ENCODE measurements at regions of chr7 and their contacts with region 1.

Region 1: DNA sequence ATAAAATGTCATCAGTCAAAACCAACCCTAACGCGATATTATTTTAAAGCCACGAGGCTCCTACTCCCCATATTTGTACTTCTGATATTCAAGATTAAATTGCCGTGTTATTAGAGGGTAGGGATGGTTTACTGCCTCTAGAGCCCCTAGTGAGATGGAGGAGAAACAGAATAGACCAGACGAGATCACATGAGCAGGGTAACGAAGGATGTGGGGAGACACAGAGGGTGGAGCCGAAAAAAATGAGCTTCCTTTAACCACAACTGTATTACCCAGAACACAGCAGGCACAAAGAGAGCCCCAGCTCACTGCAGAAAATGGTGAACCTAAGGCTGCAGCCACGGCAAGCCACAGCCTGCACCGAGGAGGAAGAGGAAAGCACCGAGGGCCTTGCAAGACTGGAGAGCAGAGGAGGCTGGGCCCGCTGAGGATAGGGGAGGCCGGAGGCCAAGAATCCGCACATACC is 14.3 kb downstream of the ZC3HAV1 start:
- DNase-seq: peak; percentile 93
- ATAC-seq: peak; percentile 97
- H3K4me3 ChIP-seq: peak overlapping the region; percentile 14 to 54 (median 35)
- H3K4me3 Mint-ChIP-seq: peak overlapping the region; percentile 83
- H3K27ac ChIP-seq: peak overlapping the region; percentile 75 to 98
- H3K27ac Mint-ChIP-seq: peak overlapping the region; percentile 91
- H3K4me1 ChIP-seq: peaks cover 66 to 67% of the 10 kb centered on the region in 2 donors
- H3K4me1 Mint-ChIP-seq: peaks cover 74% of the 10 kb centered on the region
- H3K27me3 ChIP-seq: no peaks in the 10 kb centered on the region
- H3K27me3 Mint-ChIP-seq: no peaks in the 10 kb centered on the region
- CTCF ChIP-seq: peak; percentile 31

Region 2: DNA sequence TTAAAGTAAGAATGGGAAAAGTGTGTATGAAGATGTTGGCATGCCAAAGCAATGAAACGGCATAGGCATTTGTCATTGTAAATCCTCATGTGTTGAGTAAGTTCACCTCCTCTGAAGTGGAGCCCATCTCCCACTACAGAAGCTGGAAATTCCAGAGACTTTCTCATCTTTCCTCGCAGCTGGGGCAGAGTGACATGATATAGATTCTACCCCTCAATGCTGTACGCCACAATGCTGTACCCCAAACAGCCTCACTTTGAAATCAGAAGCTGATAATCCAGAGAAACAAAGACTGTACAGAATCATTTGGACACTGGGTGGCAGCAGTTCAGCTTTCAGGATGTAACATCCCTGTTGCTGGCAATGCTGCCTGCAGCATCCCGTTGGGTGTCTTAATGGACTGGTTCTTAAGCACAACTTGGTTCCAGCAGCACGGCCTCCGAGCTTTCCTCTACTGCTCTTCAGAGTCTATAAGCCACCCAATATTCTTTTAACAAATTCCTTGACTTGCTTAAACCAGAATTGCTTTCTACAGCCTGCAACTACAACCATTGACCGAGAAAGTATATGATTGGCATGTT is 78.2 kb before region 1 on chr7:
- CTCF ChIA-PET with region 1: interaction called, 10 read pairs
- POLR2A ChIA-PET with region 1: no interaction called
- intact Hi-C with region 1: no loop called
- DNase-seq: peak; percentile 66
- ATAC-seq: peak; percentile 78
- H3K4me3 ChIP-seq: no peak overlapping the region
- H3K4me3 Mint-ChIP-seq: no peak overlapping the region
- H3K27ac ChIP-seq: no peak overlapping the region
- H3K27ac Mint-ChIP-seq: no peak overlapping the region
- H3K4me1 ChIP-seq: peaks cover 0 to 3% of the 10 kb centered on the region in 2 donors
- H3K4me1 Mint-ChIP-seq: peaks cover 4% of the 10 kb centered on the region
- H3K27me3 ChIP-seq: peaks cover 0 to 2% (median 0%) of the 10 kb centered on the region in 4 experiments
- H3K27me3 Mint-ChIP-seq: peaks cover 20% of the 10 kb centered on the region
- CTCF ChIP-seq: peak; percentile 66

Region 3: DNA sequence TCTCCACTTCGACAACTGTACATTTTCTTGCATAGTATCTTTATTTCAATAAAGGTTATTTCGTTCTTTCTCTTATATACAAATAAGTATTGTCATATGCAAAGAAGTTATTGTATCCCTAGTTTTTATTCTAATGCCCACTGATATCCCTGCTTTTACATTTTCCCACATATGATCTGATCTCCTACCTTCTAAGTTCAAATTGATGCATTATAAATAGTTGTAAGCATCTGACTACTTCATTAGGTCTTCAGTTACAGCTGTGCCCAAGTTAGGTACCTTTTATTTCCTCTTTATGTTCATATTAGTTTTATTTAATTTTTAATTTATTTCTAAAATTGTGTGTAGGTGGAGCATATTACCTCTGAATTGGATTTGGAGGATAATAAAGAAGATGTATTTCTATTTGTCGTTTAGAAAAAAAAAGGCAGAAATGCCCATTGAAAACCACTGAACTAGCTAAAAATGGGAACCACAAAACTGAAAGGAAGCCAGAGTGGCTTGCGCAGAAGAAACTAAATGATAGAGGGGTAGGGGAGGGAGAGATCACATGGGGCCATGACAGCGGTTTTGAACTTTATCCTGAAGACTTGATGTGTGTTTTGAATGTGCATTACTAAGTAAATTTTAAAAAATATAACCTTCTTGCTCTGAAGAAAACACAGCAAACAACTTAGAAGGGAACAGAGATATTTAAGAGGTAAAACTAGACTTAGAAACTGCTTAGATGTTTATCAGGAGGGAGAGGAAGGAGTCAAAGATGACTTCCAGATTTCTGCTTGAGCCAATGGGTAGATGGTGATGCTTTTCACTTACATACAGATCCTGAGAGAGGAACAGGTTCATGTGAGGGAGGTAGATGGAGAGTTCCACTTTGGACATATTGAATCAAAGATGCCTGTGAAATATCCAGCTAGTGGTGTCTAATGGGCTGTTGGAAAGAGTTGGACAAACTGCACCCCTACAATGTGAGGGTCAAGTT is 50.1 kb before region 1 on chr7:
- CTCF ChIA-PET with region 1: no interaction called
- POLR2A ChIA-PET with region 1: no interaction called
- intact Hi-C with region 1: loop called (anchors 5 kb)
- DNase-seq: peak; percentile 50
- ATAC-seq: peak; percentile 59
- H3K4me3 ChIP-seq: no peak overlapping the region
- H3K4me3 Mint-ChIP-seq: peak overlapping the region; percentile 29
- H3K27ac ChIP-seq: peak overlapping the region; percentile 19 to 70
- H3K27ac Mint-ChIP-seq: peak overlapping the region; percentile 76
- H3K4me1 ChIP-seq: peaks cover 23 to 33% of the 10 kb centered on the region in 2 donors
- H3K4me1 Mint-ChIP-seq: peaks cover 38% of the 10 kb centered on the region
- H3K27me3 ChIP-seq: no peaks in the 10 kb centered on the region
- H3K27me3 Mint-ChIP-seq: no peaks in the 10 kb centered on the region
- CTCF ChIP-seq: no peak

Region 4: DNA sequence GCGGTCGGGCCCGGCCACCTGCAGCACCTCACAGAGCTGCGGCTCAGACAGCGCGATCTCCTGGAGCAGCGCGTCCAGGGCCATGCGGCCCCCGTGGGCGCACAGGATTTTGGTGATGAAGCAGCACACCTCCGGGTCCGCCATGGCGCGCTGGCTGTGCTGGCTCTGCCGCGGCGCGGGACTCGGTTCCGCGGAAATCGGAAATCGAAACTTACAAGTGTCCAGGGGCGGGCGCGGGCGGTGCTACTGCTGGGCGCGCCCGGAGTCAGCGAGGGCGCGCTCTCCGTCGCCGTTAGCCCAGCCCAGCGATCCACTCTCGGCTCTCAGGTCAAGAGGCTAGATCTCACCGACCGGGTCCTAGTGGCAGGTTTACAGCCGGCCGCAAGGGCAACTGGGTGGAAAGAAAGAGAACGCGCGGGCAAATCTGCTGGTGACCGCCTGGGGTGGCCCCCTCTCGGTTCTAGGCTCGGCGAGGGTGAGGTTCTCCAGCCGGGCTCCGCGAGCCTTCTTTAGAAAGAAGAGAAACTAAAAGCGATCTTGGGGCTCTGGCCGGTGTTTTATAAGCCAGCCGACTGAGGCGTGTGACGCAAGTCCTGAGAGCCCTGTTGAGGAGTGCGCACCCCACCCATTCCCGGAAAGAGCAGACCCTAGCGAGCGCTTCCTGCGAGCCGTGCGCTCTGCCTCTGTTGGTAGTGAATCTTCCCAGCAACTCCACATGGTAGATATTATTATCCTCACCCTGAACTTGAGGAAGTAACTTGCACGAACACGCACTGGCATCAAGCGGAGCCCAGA is 14.2 kb after region 1 on chr7 and contains the start of gene ZC3HAV1:
- CTCF ChIA-PET with region 1: interaction called, 18 read pairs
- POLR2A ChIA-PET with region 1: interaction called, 24 read pairs
- intact Hi-C with region 1: loop called (anchors 1 kb)
- DNase-seq: peak; percentile 94
- ATAC-seq: peak; percentile 78
- H3K4me3 ChIP-seq: peak within 1 kb of the TSS; percentile 85 to 98 (median 95)
- H3K4me3 Mint-ChIP-seq: peak within 1 kb of the TSS; percentile 88
- H3K27ac ChIP-seq: peak within 1 kb of the TSS; percentile 90 to 96
- H3K27ac Mint-ChIP-seq: peak within 1 kb of the TSS; percentile 99
- H3K4me1 ChIP-seq: peaks cover 18 to 26% of the 10 kb centered on the region in 2 donors
- H3K4me1 Mint-ChIP-seq: peaks cover 34% of the 10 kb centered on the region
- H3K27me3 ChIP-seq: no peaks in the 10 kb centered on the region
- H3K27me3 Mint-ChIP-seq: no peaks in the 10 kb centered on the region
- CTCF ChIP-seq: no peak
- total RNA-seq, gene ZC3HAV1: 101 TPM in 2 replicates

Region 5: GRCh38 chr7:139118234-139118804 is 23.1 kb after region 1 on chr7:
- CTCF ChIA-PET with region 1: interaction called, 8 read pairs
- POLR2A ChIA-PET with region 1: interaction called, 13 read pairs
- intact Hi-C with region 1: no loop called
- DNase-seq: no peak
- ATAC-seq: no peak
- H3K4me3 ChIP-seq: peak overlapping the region in 2 of 5 experiments; percentile 27 to 45
- H3K4me3 Mint-ChIP-seq: peak overlapping the region; percentile 85
- H3K27ac ChIP-seq: peak overlapping the region; percentile 91
- H3K27ac Mint-ChIP-seq: peak overlapping the region; percentile 97
- H3K4me1 ChIP-seq: peaks cover 20% of the 10 kb centered on the region in 2 donors
- H3K4me1 Mint-ChIP-seq: peaks cover 25% of the 10 kb centered on the region
- H3K27me3 ChIP-seq: no peaks in the 10 kb centered on the region
- H3K27me3 Mint-ChIP-seq: no peaks in the 10 kb centered on the region
- CTCF ChIP-seq: no peak

Region 6: DNA sequence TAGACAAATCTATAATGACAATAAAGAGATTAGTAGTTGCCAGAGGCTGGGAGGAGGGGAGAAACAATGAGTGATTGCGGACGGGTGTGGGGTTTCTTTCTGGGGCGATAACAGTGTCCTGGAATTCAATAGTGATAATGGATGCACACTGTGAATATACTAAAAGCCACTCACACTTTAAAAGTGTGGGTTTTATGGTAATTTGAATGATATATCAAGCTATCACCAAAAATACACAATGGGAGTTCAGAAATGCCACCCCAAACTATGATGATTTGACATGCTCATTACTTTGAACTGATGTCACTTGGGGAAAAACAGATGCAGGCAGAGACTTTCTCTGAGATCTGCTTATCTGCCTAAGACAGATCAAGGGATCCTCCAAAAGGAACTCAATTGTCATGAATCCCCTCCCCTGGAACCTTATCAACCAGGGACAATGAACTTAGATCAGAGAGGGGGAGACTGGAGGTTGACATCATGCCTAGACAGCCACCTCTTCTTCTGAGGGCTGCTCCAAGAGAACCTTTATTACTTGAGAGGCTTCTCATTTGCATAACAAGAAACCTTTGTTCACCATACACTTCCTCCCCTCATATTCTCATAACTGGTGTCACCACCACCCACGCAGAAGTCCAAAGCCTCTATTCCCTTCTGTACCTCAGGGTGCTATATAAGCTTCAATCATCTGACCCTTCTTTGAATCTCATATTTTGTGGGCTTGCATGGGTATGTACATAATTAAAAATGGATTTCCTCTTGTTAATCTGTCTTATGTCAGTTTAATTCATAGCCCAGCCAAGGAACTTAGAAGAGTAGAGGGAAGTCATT is 29.1 kb after region 1 on chr7:
- CTCF ChIA-PET with region 1: interaction called, 16 read pairs
- POLR2A ChIA-PET with region 1: interaction called, 13 read pairs
- intact Hi-C with region 1: no loop called
- DNase-seq: no peak
- ATAC-seq: peak; percentile 31
- H3K4me3 ChIP-seq: no peak overlapping the region
- H3K4me3 Mint-ChIP-seq: no peak overlapping the region
- H3K27ac ChIP-seq: no peak overlapping the region
- H3K27ac Mint-ChIP-seq: no peak overlapping the region
- H3K4me1 ChIP-seq: peaks cover 21 to 28% of the 10 kb centered on the region in 2 donors
- H3K4me1 Mint-ChIP-seq: peaks cover 38% of the 10 kb centered on the region
- H3K27me3 ChIP-seq: no peaks in the 10 kb centered on the region
- H3K27me3 Mint-ChIP-seq: no peaks in the 10 kb centered on the region
- CTCF ChIP-seq: no peak

Region 7: DNA sequence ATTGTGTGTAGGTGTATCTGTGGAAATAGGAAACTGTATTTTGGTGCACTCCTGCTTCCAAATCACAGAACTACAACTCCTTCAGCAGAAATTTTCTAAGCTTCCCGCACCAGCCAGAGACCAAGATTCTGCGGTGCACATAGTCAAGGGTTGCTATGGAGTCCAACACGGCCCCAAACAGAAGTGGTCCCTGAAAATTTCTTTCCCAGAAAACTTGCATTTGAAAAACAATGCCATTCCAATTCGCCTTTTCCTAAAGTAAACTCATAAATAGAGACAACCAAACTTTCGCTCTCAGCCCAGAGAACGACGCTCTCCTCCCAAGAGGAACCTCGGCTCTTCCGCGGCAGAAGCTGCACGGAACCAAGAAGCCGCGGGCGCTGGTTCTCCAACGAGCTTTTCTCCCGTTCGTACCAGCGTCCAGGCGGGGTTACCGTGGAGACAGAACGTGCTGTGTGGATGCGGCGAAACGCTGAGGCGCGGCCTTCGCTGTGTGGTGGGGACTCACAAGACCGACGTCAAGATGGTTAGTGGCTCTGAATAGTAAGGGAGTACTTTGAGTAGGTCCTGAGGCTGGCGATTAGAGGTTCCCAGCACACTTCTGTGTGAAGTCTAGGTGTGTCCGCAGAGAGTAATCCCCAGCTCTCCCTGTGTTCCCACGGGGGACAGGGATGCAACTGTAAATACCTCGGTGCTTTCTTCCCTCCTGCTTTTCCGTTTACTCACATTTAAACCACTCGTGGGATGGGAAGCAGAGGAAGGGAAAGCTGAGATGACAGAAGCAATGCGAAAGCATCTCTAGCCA is 38.3 kb after region 1 on chr7:
- CTCF ChIA-PET with region 1: interaction called, 16 read pairs
- POLR2A ChIA-PET with region 1: interaction called, 6 read pairs
- intact Hi-C with region 1: loop called (anchors 5 kb)
- DNase-seq: peak; percentile 90
- ATAC-seq: peak; percentile 96
- H3K4me3 ChIP-seq: peak overlapping the region; percentile 46 to 63 (median 58)
- H3K4me3 Mint-ChIP-seq: peak overlapping the region; percentile 93
- H3K27ac ChIP-seq: peak overlapping the region; percentile 18 to 69
- H3K27ac Mint-ChIP-seq: peak overlapping the region; percentile 88
- H3K4me1 ChIP-seq: peaks cover 9 to 13% of the 10 kb centered on the region in 2 donors
- H3K4me1 Mint-ChIP-seq: peaks cover 18% of the 10 kb centered on the region
- H3K27me3 ChIP-seq: no peaks in the 10 kb centered on the region
- H3K27me3 Mint-ChIP-seq: no peaks in the 10 kb centered on the region
- CTCF ChIP-seq: no peak